Naive thymus-derived CD4-positive, alpha-beta T cell (primary cell): ENCODE measurements at regions of chr3 and their contacts with region 1.

Region 1: GRCh38 chr3:152268555-152269425 is at the start of gene MBNL1:
- DNase-seq: peak; percentile 65 to 89 (median 87)
- ATAC-seq: peak; percentile 77
- H3K4me3 ChIP-seq: peak within 1 kb of the TSS; percentile 77
- H3K4me3 Mint-ChIP-seq: peak within 1 kb of the TSS; percentile 78 to 100 (median 94)
- H3K27ac ChIP-seq: peak within 1 kb of the TSS; percentile 99
- H3K27ac Mint-ChIP-seq: peak within 1 kb of the TSS; percentile 88 to 98 (median 95)
- H3K4me1 ChIP-seq: peaks cover 34 to 46% of the 10 kb centered on the region in 2 donors
- H3K4me1 Mint-ChIP-seq: peaks cover 46 to 69% (median 64%) of the 10 kb centered on the region in 7 donors
- H3K27me3 ChIP-seq: no peaks in the 10 kb centered on the region
- H3K27me3 Mint-ChIP-seq: no peaks in the 10 kb centered on the region
- total RNA-seq, gene MBNL1: 459 to 675 (median 508) TPM

Region 2: GRCh38 chr3:150546226-150547044 is 1722.4 kb before region 1 on chr3 and contains the starts of genes EIF2A and SERP1:
- CTCF ChIA-PET with region 1: no interaction called
- POLR2A ChIA-PET with region 1: no interaction called
- intact Hi-C with region 1: loop called in 1 of 2 experiments (anchors 2 kb)
- DNase-seq: peak; percentile 97 to 100 (median 100)
- ATAC-seq: peak; percentile 94
- H3K4me3 ChIP-seq: peak within 1 kb of the TSS; percentile 78
- H3K4me3 Mint-ChIP-seq: peak within 1 kb of the TSS; percentile 88 to 99 (median 96)
- H3K27ac ChIP-seq: peak within 1 kb of the TSS; percentile 96
- H3K27ac Mint-ChIP-seq: peak within 1 kb of the TSS; percentile 93 to 100 (median 98)
- H3K4me1 ChIP-seq: peaks cover 15 to 23% of the 10 kb centered on the region in 2 donors
- H3K4me1 Mint-ChIP-seq: peaks cover 34 to 84% (median 79%) of the 10 kb centered on the region in 7 donors
- H3K27me3 ChIP-seq: no peaks in the 10 kb centered on the region
- H3K27me3 Mint-ChIP-seq: no peaks in the 10 kb centered on the region
- total RNA-seq, gene EIF2A: 94.7 to 135 (median 105) TPM
- total RNA-seq, gene SERP1: 89.4 to 120 (median 115) TPM

Region 3: GRCh38 chr3:152051501-152052404 is 217.0 kb before region 1 on chr3:
- CTCF ChIA-PET with region 1: no interaction called
- POLR2A ChIA-PET with region 1: no interaction called
- intact Hi-C with region 1: no loop called
- DNase-seq: no peak
- ATAC-seq: no peak
- H3K4me3 ChIP-seq: no peak overlapping the region
- H3K4me3 Mint-ChIP-seq: no peak overlapping the region
- H3K27ac ChIP-seq: no peak overlapping the region
- H3K27ac Mint-ChIP-seq: no peak overlapping the region
- H3K4me1 ChIP-seq: no peaks in the 10 kb centered on the region
- H3K4me1 Mint-ChIP-seq: peaks cover 0 to 3% (median 0%) of the 10 kb centered on the region in 7 donors
- H3K27me3 ChIP-seq: no peaks in the 10 kb centered on the region
- H3K27me3 Mint-ChIP-seq: peaks cover 0 to 27% (median 0%) of the 10 kb centered on the region in 5 donors

Region 4: DNA sequence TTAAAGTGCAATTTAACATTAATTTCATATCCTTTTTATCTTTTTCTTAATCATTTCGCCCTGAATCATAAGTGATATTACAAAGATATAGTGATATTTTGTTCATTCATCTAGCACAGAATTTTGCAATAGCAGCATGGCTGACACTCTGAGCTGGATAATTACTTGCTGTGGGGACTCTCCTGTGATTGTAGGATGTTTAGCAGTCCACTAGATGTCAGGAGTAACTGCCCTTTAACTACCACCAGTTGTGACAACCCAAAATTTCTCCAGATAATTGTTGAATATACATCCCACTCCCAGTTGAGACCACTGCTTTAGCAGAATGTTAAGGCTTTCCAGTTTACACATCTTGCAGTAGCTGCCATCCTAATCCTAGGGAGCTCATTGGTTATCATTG is 196.9 kb before region 1 on chr3:
- CTCF ChIA-PET with region 1: no interaction called
- POLR2A ChIA-PET with region 1: interaction called, 3 read pairs
- intact Hi-C with region 1: loop called (anchors 2 to 5 kb)
- DNase-seq: peak in 6 of 9 donors; percentile 10 to 43 (median 32)
- ATAC-seq: peak; percentile 75
- H3K4me3 ChIP-seq: no peak overlapping the region
- H3K4me3 Mint-ChIP-seq: no peak overlapping the region
- H3K27ac ChIP-seq: no peak overlapping the region
- H3K27ac Mint-ChIP-seq: no peak overlapping the region
- H3K4me1 ChIP-seq: peaks cover 0 to 5% of the 10 kb centered on the region in 2 donors
- H3K4me1 Mint-ChIP-seq: peaks cover 0 to 6% (median 3%) of the 10 kb centered on the region in 7 donors
- H3K27me3 ChIP-seq: no peaks in the 10 kb centered on the region
- H3K27me3 Mint-ChIP-seq: peaks cover 0 to 6% (median 0%) of the 10 kb centered on the region in 5 donors

Region 5: DNA sequence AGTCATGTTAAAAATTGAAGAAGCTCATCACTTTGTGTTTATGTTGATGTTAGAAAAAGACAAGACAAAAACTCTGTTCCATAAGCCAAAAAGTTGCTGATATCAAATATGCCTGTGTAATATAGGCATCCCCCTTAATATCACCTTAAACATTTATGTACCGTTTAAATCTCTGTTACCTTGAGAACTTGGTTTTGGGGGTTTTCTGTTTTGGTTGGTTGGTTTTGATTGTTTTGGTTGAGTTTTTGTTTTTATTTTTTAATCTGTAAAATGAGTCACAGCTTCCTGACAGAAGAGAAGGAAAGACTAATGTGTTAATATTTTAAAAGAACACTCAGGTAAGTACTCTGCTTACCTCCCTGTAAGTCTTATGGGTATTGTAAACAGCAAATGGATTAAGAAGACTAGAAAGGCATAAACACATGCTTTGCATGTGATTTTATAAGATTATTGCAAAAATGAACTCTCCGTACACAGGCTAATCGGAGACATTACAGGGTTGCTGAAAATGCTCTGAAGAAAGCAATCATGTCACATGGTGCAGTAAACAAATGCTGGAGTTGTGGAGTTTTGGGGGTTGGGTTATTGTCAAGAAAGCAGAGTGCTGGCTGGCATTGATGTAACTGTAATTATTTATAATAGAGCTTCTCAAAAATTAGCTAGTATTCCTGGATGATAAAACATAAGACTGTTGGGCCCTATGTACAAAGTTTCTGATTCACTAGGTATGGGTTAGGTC is 69.5 kb before region 1 on chr3:
- CTCF ChIA-PET with region 1: interaction called, 6 read pairs
- POLR2A ChIA-PET with region 1: interaction called, 198 read pairs
- intact Hi-C with region 1: loop called (anchors 1 kb)
- DNase-seq: peak in 2 of 9 donors; percentile 37
- ATAC-seq: peak; percentile 58
- H3K4me3 ChIP-seq: peak overlapping the region; percentile 50
- H3K4me3 Mint-ChIP-seq: peak overlapping the region; percentile 63 to 89 (median 84)
- H3K27ac ChIP-seq: peak overlapping the region; percentile 84
- H3K27ac Mint-ChIP-seq: peak overlapping the region; percentile 90 to 100 (median 94)
- H3K4me1 ChIP-seq: peaks cover 30 to 58% of the 10 kb centered on the region in 2 donors
- H3K4me1 Mint-ChIP-seq: peaks cover 43 to 84% (median 71%) of the 10 kb centered on the region in 7 donors
- H3K27me3 ChIP-seq: no peaks in the 10 kb centered on the region
- H3K27me3 Mint-ChIP-seq: no peaks in the 10 kb centered on the region

Region 6: GRCh38 chr3:152229692-152230091 is 39.1 kb before region 1 on chr3:
- CTCF ChIA-PET with region 1: interaction called, 5 read pairs
- POLR2A ChIA-PET with region 1: interaction called, 31 read pairs
- intact Hi-C with region 1: no loop called
- DNase-seq: no peak
- ATAC-seq: no peak
- H3K4me3 ChIP-seq: no peak overlapping the region
- H3K4me3 Mint-ChIP-seq: peak overlapping the region in 4 of 10 donors; percentile 4 to 73 (median 34)
- H3K27ac ChIP-seq: no peak overlapping the region
- H3K27ac Mint-ChIP-seq: peak overlapping the region in 5 of 9 donors; percentile 1 to 75 (median 36)
- H3K4me1 ChIP-seq: peaks cover 4 to 32% of the 10 kb centered on the region in 2 donors
- H3K4me1 Mint-ChIP-seq: peaks cover 30 to 83% (median 71%) of the 10 kb centered on the region in 7 donors
- H3K27me3 ChIP-seq: no peaks in the 10 kb centered on the region
- H3K27me3 Mint-ChIP-seq: no peaks in the 10 kb centered on the region

Region 7: DNA sequence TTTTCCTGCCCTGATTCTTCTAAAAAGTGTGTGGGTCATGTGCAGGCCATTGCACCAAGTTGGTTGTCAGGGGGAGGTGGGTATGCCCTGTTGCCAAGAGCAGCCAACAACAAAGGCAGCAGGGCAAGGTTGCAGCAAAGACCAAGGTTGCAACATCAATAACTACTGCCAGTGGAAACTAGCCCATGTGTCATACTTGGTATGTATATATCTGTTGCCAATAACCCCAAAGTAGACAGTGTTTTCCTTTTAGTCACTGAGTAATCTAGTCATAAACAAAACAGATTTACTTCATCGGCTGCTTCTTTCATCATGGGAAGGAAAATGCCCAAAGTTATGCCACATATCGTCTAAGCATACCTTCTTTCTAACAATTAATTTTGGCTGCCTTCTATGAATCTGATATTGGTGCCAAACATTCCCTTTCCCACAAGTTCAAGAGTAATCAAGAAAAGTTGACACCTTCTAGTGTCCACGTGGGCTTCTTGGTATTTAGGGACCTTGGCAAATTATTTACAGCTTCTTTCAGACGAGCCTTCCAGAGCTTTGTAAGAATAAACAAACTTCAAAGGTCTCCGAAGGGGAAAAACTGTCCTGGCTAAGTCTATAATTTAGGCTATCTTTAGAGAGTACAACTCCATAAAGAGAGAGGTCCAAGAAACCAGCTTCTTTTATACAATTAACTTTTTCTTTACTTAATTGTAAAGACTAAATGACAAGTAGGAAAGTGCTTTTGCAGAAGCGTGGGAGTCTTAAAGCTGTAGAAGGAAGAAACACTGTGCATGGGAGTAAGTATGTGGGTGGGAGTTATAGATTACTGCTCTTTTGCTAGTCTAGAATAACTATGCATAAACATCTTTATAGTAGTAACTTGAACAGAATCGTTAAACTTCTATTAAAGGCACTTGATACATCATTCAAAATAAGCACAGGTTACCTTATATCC is 10.1 kb before region 1 on chr3:
- CTCF ChIA-PET with region 1: interaction called, 16 read pairs
- POLR2A ChIA-PET with region 1: interaction called, 229 read pairs
- intact Hi-C with region 1: loop called (anchors 1 kb)
- DNase-seq: peak in 6 of 9 donors; percentile 34 to 90 (median 52)
- ATAC-seq: peak; percentile 87
- H3K4me3 ChIP-seq: peak overlapping the region; percentile 3
- H3K4me3 Mint-ChIP-seq: peak overlapping the region; percentile 71 to 87 (median 81)
- H3K27ac ChIP-seq: peak overlapping the region; percentile 83
- H3K27ac Mint-ChIP-seq: peak overlapping the region; percentile 83 to 99 (median 95)
- H3K4me1 ChIP-seq: peaks cover 72 to 78% of the 10 kb centered on the region in 2 donors
- H3K4me1 Mint-ChIP-seq: peaks cover 68 to 98% (median 90%) of the 10 kb centered on the region in 7 donors
- H3K27me3 ChIP-seq: no peaks in the 10 kb centered on the region
- H3K27me3 Mint-ChIP-seq: no peaks in the 10 kb centered on the region

Region 8: GRCh38 chr3:152298393-152299242 is 29.8 kb after region 1 on chr3:
- CTCF ChIA-PET with region 1: no interaction called
- POLR2A ChIA-PET with region 1: interaction called, 7 read pairs
- intact Hi-C with region 1: loop called (anchors 1 kb)
- DNase-seq: peak in 8 of 9 donors; percentile 43 to 77 (median 72)
- ATAC-seq: peak; percentile 83
- H3K4me3 ChIP-seq: peak overlapping the region; percentile 45
- H3K4me3 Mint-ChIP-seq: peak overlapping the region; percentile 70 to 85 (median 76)
- H3K27ac ChIP-seq: peak overlapping the region; percentile 64
- H3K27ac Mint-ChIP-seq: peak overlapping the region; percentile 78 to 98 (median 89)
- H3K4me1 ChIP-seq: peaks cover 80% of the 10 kb centered on the region in 2 donors
- H3K4me1 Mint-ChIP-seq: peaks cover 55 to 95% (median 82%) of the 10 kb centered on the region in 7 donors
- H3K27me3 ChIP-seq: no peaks in the 10 kb centered on the region
- H3K27me3 Mint-ChIP-seq: no peaks in the 10 kb centered on the region